ENCODE measurements at regions of chr1 and their contacts with region 1.

Region 1: DNA sequence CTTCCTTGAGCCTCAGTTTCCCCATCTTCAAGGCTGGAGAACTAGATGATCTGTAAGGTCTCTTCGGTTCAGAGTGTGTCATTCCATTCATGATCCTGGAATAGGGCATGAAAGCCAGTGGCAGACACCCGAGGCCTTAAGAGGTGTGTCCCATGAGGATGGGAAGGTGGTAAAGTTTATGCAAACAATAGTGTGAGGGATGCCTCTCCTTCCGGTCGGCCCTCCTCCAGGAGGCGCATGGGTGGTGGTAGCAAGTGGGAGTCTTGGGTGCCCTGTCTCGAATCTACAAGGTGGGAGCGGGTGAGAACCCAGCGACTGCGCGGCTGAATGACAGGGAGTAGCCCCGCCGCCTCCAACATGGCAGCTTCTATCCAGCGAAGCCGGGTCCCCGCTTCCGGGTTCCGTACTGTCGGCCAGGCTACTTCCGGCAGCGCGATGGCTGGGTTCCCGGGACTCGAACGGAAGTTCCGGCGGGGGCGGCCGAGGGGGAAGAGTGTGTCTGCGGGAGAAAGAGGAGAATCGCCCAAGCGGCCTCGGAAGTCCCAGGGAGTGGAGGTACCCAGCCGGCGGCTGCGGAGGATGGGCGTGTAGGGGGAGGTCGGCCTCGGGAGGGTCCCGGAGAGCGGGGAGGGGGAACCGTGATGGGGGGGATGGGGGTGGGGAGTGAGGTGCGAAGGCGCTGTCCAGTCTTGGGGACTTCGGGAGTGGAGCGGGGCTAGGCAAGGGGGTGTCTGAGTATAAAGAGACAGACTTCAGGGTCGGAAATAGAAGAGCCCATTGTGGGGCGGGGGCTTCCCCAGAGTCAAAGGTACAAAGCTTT is at the start of gene LYPLA2:
- DNase-seq: peak; percentile 98
- total RNA-seq, gene LYPLA2: 27.2 TPM

Region 2: DNA sequence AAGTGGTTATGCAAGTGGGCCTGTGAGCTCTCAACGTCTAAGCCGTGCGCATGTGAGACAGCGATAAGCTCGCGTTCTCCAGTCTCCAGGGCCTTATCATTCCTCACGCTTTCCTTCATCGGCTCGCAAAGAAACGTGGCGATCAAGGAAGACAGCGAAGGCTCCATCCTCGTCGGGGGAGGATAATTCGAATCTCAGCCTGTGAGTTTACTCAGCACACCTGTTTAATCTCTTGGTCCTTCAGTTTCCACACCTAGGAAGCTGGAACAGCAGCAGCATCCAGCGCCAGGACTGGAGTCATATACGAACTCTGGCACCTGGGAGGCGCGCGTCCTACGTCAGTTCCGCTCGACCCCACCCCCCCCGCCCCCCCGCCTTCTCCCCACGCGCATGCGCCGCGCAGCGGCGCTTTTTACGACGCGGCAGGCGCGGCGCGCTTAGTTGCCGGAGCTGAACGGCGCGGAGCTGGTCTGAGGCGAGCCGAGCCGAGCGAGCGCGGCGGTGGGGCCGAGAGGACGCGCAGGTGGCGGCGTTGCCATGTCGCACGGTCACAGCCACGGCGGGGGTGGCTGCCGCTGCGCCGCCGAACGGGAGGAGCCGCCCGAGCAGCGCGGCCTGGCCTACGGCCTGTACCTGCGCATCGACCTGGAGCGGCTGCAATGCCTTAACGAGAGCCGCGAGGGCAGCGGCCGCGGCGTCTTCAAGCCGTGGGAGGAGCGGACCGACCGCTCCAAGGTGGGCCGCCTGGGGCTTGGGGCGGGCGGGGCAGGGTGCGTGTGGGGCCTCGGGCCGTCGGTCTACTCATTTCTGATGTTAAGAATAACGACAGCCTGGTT is 12.7 kb before region 1 on chr1 and contains the start of gene PITHD1:
- intact Hi-C with region 1: loop called (anchors 2 kb)
- DNase-seq: peak; percentile 91
- total RNA-seq, gene PITHD1: 33.7 TPM

Region 3: GRCh38 chr1:23825076-23825761 is 34.3 kb after region 1 on chr1 and contains the start of gene HMGCL:
- intact Hi-C with region 1: loop called (anchors 5 kb)
- DNase-seq: peak; percentile 96
- total RNA-seq, gene HMGCL: 27.9 TPM

Measured in cardiac septum (tissue), 1 donor.